SK-N-SH (cell line): ENCODE measurements at regions of chr17 and their contacts with region 1.

Region 1: GRCh38 chr17:1495265-1495989 is 2.9 kb upstream of the MYO1C start:
- DNase-seq: no peak
- H3K4me3 ChIP-seq: no peak overlapping the region
- H3K27ac ChIP-seq: peak overlapping the region in 1 of 2 experiments; percentile 48; a peak in 1 of 4 replicates
- H3K4me1 ChIP-seq: peaks cover 8 to 19% of the 10 kb centered on the region in 2 experiments; a peak in 3 of 4 replicates
- H3K27me3 ChIP-seq: no peaks in the 10 kb centered on the region
- CTCF ChIP-seq: no peak
- EP300 ChIP-seq: no peak
- RAD21 ChIP-seq: no peak

Region 2: GRCh38 chr17:1511290-1511689 is 15.9 kb after region 1 on chr17:
- CTCF ChIA-PET with region 1: interaction called, 13 read pairs
- POLR2A ChIA-PET with region 1: interaction called, 14 read pairs
- DNase-seq: no peak
- H3K4me3 ChIP-seq: no peak overlapping the region
- H3K27ac ChIP-seq: no peak overlapping the region
- H3K4me1 ChIP-seq: peaks cover 0 to 10% of the 10 kb centered on the region in 2 experiments; a peak in 2 of 4 replicates
- H3K27me3 ChIP-seq: no peaks in the 10 kb centered on the region
- CTCF ChIP-seq: no peak
- EP300 ChIP-seq: no peak
- RAD21 ChIP-seq: no peak